Ovary (tissue), 10 donors: ENCODE measurements at regions of chr5 and their contacts with region 1.

Region 1: DNA sequence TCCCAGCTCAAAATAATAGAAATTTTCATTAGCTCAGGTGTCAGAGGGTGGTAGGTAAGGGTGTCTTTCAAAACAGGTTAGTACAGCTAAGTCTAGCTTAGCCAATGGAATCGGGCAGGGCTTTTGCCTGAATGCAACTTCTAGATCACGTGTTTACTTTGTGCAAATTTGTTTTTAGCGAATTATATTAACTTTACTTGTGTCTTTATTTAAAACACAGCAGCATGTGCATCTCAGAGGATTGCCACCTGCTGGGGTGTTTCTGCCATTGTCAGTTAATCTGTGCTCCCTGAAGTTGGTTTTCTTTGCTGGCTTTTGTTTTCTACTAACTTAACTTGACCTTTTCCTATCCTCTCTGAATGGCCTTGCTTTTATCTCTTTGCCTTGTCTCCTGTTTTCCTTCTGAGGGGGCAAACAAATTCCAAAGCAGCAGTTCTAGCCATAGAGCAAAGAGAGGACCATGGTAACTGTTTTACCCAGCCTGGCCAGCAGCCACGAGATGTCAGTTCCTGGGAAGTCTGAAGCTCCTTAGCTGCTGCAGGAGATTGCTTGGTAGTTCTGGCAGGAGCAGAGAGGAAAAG is 67.6 kb downstream of the ARHGEF28 start:
- DNase-seq: peak; percentile 59 to 86 (median 82)
- H3K4me3 ChIP-seq: no peak overlapping the region
- H3K27ac ChIP-seq: peak overlapping the region; percentile 31 to 77
- H3K4me1 ChIP-seq: peaks cover 32% of the 10 kb centered on the region
- H3K27me3 ChIP-seq: no peaks in the 10 kb centered on the region
- CTCF ChIP-seq: peak; percentile 11 to 64 (median 44)
- EP300 ChIP-seq: no peak
- POLR2A ChIP-seq: no peak

Region 2: DNA sequence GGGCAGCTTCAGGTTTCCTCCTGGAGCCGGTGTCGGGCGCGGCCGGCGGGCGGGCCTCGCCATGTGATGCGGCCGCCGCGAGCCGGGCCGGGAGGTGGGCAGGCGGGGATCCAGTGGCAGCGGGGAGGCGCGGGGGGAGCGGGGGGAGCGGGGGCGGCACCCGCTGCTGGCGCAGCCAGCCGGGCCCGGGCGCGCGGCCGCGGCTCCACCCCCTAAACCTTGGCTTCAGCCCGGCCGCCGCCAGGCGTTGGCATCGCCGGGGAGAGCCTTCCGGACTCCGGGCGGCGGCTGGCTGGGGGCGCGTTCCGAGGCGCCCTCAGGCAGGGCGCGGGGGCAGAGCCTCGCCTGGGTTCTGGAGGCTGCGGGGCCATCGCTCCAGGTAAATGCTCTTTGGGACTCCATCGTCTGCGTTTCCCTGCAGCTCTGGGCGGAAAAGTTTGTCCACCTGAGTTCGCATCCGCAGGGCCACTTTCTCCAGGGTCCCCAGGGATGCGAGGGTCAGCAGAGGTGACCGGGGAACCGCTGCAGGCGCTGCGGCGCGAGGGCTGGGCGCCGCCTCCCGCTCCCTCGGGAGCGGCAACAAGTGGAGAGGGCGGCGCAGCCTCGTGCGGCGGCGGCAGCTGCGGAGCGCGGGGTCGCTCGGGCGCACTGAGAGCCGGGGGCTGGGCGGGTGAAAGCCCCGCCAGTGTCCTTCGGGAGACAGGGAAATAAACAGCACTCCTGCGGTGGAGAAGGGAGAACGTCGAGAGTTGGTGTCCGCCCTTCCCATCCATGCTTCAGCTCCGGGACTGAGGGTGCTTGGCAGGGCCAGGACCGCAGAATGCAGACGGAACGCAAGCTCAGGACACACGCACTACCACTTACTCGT is 67.4 kb before region 1 on chr5 and contains the start of gene ARHGEF28:
- intact Hi-C with region 1: loop called in 1 of 4 experiments (anchors 10 kb)
- DNase-seq: peak; percentile 58 to 78 (median 76)
- H3K4me3 ChIP-seq: peak within 1 kb of the TSS; percentile 64
- H3K27ac ChIP-seq: peak within 1 kb of the TSS; percentile 64 to 82
- H3K4me1 ChIP-seq: peaks cover 3% of the 10 kb centered on the region
- H3K27me3 ChIP-seq: no peaks in the 10 kb centered on the region
- CTCF ChIP-seq: no peak
- EP300 ChIP-seq: no peak
- POLR2A ChIP-seq: no peak
- total RNA-seq, gene ARHGEF28: 29.4 to 75.6 (median 36.6) TPM

Region 3: GRCh38 chr5:73722231-73722630 is 28.7 kb after region 1 on chr5:
- intact Hi-C with region 1: no loop called
- DNase-seq: no peak
- H3K4me3 ChIP-seq: no peak overlapping the region
- H3K27ac ChIP-seq: no peak overlapping the region
- H3K4me1 ChIP-seq: peaks cover 8% of the 10 kb centered on the region
- H3K27me3 ChIP-seq: no peaks in the 10 kb centered on the region
- CTCF ChIP-seq: no peak
- EP300 ChIP-seq: no peak
- POLR2A ChIP-seq: no peak

Region 4: DNA sequence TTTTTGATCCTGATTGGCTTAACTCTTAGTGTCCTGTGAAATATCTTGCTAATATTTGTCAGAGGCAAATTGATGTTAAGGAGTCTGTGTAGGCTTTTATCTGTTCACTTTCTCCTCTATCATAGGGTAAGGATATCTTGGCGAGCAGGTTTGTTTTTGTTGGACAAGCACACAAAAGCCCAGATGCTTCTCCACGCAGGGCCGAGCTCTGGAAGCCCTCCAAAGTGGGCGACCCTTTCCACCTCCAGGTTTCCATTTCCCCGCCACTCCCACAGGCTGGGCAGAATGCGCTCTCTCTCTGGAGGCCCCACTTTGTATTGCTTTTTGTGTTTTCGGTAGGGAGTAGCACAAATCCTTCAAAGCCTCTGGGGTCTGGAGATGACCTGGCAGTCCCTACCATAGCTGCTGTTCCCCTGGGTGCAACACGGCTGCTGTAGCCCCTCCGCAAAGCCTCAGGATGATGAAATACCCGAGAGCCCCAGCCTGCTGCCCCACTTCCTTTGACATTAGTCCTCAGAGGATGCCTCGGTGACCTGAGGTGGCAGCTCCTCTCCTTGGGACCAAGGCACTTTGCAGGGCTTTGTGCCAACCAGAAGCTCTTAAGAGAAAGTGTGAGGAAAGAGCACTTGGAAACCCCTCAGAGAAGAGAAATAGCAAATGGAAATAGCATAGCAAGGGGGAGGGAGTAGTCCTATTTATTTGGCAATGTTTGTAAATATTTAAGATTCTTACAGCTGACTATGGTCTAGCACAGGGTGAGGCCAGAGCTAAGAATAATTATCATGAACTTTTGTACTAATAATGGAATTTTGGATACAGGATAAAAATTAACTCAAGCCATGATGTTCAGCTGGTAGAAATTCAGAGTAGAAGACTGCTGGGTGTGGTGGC is 55.2 kb after region 1 on chr5:
- intact Hi-C with region 1: loop called in 1 of 4 experiments (anchors 10 kb)
- DNase-seq: peak; percentile 80 to 94 (median 92)
- H3K4me3 ChIP-seq: no peak overlapping the region
- H3K27ac ChIP-seq: peak overlapping the region; percentile 39 to 76
- H3K4me1 ChIP-seq: peaks cover 17% of the 10 kb centered on the region
- H3K27me3 ChIP-seq: no peaks in the 10 kb centered on the region
- CTCF ChIP-seq: no peak
- EP300 ChIP-seq: no peak
- POLR2A ChIP-seq: no peak

Region 5: DNA sequence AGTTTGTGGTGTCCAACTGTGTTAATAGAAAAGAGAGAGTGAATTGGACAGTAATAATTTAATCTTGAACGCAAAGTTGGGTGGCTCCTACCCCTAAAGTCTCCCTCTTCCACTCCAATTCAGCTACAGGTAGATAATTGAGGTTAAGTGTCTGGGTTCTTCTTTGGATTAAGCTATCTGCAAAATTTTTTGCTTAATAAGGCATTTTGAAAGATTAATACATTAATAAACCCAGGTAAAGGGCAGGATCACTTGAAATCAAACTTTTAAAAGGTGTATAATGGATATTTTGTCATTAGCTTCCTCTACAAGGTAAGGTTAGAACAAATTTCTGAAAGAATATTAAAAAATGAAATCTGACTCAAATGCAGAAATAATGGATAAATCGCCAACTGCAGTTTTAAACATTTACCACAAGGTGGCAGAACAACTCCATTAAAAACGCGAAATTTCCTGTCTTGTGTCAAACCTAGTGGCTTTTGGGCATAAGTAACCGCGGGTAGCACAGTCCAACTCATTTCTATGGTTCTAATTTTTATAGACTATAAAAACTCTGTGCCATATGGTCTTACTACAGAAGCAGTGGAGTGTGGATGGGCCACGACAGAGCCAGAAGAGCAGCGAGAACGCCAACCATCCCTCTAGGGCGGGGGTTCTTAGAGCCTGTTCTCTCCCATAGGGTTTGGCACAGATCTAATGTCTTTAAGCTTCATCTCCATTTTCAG is 208.9 kb after region 1 on chr5:
- intact Hi-C with region 1: no loop called
- DNase-seq: peak in 1 of 5 donors; percentile 39
- H3K4me3 ChIP-seq: no peak overlapping the region
- H3K27ac ChIP-seq: no peak overlapping the region
- H3K4me1 ChIP-seq: no peaks in the 10 kb centered on the region
- H3K27me3 ChIP-seq: no peaks in the 10 kb centered on the region
- CTCF ChIP-seq: peak; percentile 70 to 93 (median 92)
- EP300 ChIP-seq: no peak
- POLR2A ChIP-seq: no peak